ENCODE measurements at regions of chr1 and their contacts with region 1.

Region 1: DNA sequence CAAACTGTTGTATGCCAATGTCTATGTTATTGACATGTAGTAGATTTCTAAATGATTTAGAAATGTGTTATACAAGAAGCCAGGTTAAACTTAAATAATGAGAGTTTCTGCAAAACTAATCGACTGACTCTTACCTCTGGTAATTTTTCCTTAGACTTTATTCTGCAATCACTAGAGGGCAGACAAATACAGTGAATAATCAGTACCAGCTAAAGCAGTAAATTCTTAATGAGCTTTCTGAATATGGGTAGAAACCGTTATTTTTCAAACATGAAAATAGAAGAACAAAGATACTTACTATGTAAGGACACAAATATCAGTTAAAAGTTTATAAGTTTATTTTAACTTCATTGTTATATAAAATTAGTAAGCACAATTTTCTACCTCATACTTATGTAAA is 97.9 kb upstream of the RGS1 start:
- DNase-seq: no peak
- ATAC-seq: peak in 3 of 4 donors; percentile 23 to 76 (median 70)
- H3K4me3 ChIP-seq: no peak overlapping the region
- H3K27ac ChIP-seq: peak overlapping the region in 2 of 12 donors; percentile 51 to 66
- H3K4me1 ChIP-seq: peaks cover 0 to 17% (median 3%) of the 10 kb centered on the region in 12 donors
- H3K27me3 ChIP-seq: peaks cover 0 to 1% (median 0%) of the 10 kb centered on the region in 9 donors
- CTCF ChIP-seq: peak; percentile 2 to 69 (median 58)
- POLR2A ChIP-seq: no peak

Region 2: GRCh38 chr1:192602757-192603156 is 125.1 kb after region 1 on chr1:
- intact Hi-C with region 1: loop called in 4 of 10 experiments (anchors 2 to 5 kb)
- DNase-seq: no peak
- ATAC-seq: no peak
- H3K4me3 ChIP-seq: no peak overlapping the region
- H3K27ac ChIP-seq: no peak overlapping the region
- H3K4me1 ChIP-seq: peaks cover 0 to 8% (median 1%) of the 10 kb centered on the region in 12 donors
- H3K27me3 ChIP-seq: no peaks in the 10 kb centered on the region
- CTCF ChIP-seq: no peak
- POLR2A ChIP-seq: no peak

Region 3: GRCh38 chr1:192609110-192610079 is 131.8 kb after region 1 on chr1:
- intact Hi-C with region 1: loop called in 9 of 10 experiments (anchors 2 to 5 kb)
- DNase-seq: peak; percentile 26 to 60 (median 32)
- ATAC-seq: peak; percentile 39 to 79 (median 61)
- H3K4me3 ChIP-seq: no peak overlapping the region
- H3K27ac ChIP-seq: peak overlapping the region in 1 of 12 donors; percentile 41
- H3K4me1 ChIP-seq: peaks cover 0 to 16% (median 0%) of the 10 kb centered on the region in 12 donors
- H3K27me3 ChIP-seq: no peaks in the 10 kb centered on the region
- CTCF ChIP-seq: no peak
- POLR2A ChIP-seq: no peak

Region 4: DNA sequence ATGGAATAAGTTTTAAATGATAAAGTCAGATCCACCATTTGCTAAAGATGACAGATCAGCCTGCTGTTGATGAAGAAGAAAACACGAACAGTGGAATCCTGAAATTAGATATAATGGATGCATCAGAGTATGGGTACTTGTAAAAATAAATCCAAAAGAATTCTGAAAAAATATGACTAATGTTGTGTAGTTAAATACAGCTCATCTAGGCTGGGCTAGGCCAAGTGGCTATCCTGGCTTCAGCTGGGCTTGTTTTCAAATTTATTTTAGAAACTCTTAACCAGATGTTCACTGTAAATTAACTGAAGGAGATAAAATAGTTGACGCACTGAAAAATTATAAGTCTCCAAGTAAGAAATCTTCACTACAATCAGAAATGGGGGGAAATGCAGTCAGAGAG is 323.8 kb after region 1 on chr1:
- intact Hi-C with region 1: loop called in 8 of 10 experiments (anchors 5 to 10 kb)
- DNase-seq: no peak
- ATAC-seq: no peak
- H3K4me3 ChIP-seq: no peak overlapping the region
- H3K27ac ChIP-seq: no peak overlapping the region
- H3K4me1 ChIP-seq: peaks cover 0 to 9% (median 0%) of the 10 kb centered on the region in 12 donors
- H3K27me3 ChIP-seq: no peaks in the 10 kb centered on the region
- CTCF ChIP-seq: no peak
- POLR2A ChIP-seq: no peak

Region 5: DNA sequence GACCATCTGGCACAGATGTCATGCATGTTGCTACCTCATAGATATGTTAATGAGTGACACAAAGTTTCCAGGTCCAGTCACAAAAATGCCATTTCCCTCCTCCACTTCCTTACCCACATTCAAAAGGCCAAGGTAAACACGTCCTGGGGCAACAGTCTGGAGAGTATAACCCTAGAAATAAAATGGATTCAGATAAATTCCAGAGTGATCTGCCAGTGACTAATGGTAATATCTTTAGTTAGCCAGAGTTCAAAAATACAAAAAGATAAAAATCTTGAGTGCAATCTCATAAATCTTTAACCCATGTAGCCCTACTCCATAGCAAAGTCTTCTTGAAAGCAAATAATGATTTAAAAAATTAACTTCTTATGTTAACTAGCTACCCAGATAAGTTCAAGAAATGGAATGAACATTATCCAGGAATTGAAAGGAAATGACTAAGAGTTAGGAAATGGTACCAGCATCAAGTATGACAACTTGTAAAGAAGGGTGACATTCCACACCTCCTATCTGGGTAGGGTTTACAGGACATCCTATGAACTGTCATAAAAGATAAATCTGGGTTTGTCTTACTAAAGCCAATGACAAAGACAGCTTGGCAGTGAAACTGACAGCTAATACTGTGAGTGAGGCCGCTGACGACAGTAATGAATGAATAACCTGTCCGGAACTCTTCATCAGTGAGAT is 349.3 kb after region 1 on chr1:
- intact Hi-C with region 1: no loop called
- DNase-seq: no peak
- ATAC-seq: no peak
- H3K4me3 ChIP-seq: no peak overlapping the region
- H3K27ac ChIP-seq: no peak overlapping the region
- H3K4me1 ChIP-seq: no peaks in the 10 kb centered on the region
- H3K27me3 ChIP-seq: no peaks in the 10 kb centered on the region
- CTCF ChIP-seq: no peak
- POLR2A ChIP-seq: no peak

Region 6: DNA sequence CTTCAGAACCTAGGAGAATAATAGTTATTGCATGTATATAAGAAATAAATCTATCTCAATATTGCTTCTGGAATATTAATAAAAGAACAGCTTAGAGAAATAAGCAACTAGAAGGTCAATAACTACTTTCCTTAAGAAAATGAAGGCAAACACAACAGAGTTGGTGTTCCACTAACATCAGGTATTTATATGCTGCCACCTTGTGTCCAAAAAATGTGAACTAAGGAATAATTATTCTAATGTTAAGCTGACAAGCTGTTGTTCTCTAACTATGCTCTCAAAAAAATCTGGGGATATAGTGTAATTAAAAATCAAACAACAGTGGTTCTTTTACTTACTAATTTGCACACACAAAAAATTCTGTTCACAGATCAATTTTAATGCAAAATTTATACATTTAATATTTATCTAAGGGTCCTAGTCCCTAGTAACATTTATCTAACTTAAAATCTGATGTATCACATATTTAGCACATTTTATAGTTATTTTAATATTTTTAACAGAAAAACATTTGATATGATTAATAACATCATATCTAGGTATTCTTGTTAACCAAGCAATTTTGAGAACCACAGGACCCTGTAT is 541.9 kb after region 1 on chr1:
- intact Hi-C with region 1: loop called (anchors 1 to 5 kb)
- DNase-seq: no peak
- ATAC-seq: peak in 2 of 4 donors; percentile 37 to 71
- H3K4me3 ChIP-seq: no peak overlapping the region
- H3K27ac ChIP-seq: peak overlapping the region in 1 of 12 donors; percentile 19
- H3K4me1 ChIP-seq: peaks cover 0 to 2% (median 0%) of the 10 kb centered on the region in 12 donors
- H3K27me3 ChIP-seq: no peaks in the 10 kb centered on the region
- CTCF ChIP-seq: peak; percentile 43 to 72 (median 56)
- POLR2A ChIP-seq: no peak

Region 7: DNA sequence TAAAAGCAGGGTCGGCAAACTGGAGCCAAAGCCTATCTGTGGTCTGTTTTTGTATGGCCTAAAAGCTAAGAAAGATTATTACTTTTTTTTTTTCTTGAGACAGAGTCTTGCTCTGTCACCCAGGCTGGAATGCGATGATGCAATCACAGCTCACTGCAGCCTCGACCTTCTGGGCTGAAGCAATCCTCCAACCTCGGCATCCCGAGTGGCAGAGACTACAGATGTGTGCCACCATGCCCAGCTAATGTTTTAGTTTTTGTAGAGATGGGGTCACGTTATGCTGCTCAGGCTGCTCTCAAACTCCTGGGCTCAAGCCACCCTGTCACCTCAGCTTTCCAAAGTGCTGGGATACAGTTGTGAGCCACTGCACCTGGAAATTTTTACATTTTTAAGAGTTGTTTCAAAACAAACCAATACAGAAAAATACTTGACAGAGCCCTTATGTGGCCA is 634.0 kb after region 1 on chr1:
- intact Hi-C with region 1: loop called in 1 of 10 experiments (anchors 10 kb)
- DNase-seq: peak in 2 of 5 donors; percentile 70 to 75
- ATAC-seq: peak; percentile 6 to 80 (median 56)
- H3K4me3 ChIP-seq: no peak overlapping the region
- H3K27ac ChIP-seq: peak overlapping the region in 3 of 12 donors; percentile 38 to 49 (median 43)
- H3K4me1 ChIP-seq: peaks cover 0 to 19% (median 4%) of the 10 kb centered on the region in 12 donors
- H3K27me3 ChIP-seq: no peaks in the 10 kb centered on the region
- CTCF ChIP-seq: no peak
- POLR2A ChIP-seq: no peak

Region 8: GRCh38 chr1:193121616-193122593 is 644.3 kb after region 1 on chr1 and contains the start of gene CDC73:
- intact Hi-C with region 1: loop called in 7 of 10 experiments (anchors 5 to 10 kb)
- DNase-seq: peak; percentile 97 to 99 (median 98)
- ATAC-seq: peak; percentile 98 to 100 (median 98)
- H3K4me3 ChIP-seq: peak within 1 kb of the TSS; percentile 60 to 89 (median 78)
- H3K27ac ChIP-seq: peak within 1 kb of the TSS; percentile 88 to 99 (median 95)
- H3K4me1 ChIP-seq: peaks cover 4 to 41% (median 21%) of the 10 kb centered on the region in 12 donors
- H3K27me3 ChIP-seq: no peaks in the 10 kb centered on the region
- CTCF ChIP-seq: peak; percentile 84 to 99 (median 92)
- POLR2A ChIP-seq: peak in 1 of 2 donors; percentile 85
- total RNA-seq, gene CDC73: 26.6 to 57.3 (median 53.6) TPM

Measured in heart left ventricle (tissue), 16 donors.